ENCODE measurements at regions of chr15 and their contacts with region 1.

Region 1: GRCh38 chr15:73633111-73633990 is at the start of gene NPTN:
- DNase-seq: peak; percentile 96 to 99 (median 97)
- ATAC-seq: peak; percentile 90
- H3K4me3 ChIP-seq: peak within 1 kb of the TSS; percentile 51 to 74
- H3K4me3 Mint-ChIP-seq: peak within 1 kb of the TSS; percentile 82
- H3K27ac ChIP-seq: peak within 1 kb of the TSS; percentile 25 to 78
- H3K27ac Mint-ChIP-seq: peak within 1 kb of the TSS; percentile 81
- H3K4me1 ChIP-seq: peaks cover 33% of the 10 kb centered on the region
- H3K4me1 Mint-ChIP-seq: peaks cover 45% of the 10 kb centered on the region
- H3K27me3 ChIP-seq: no peaks in the 10 kb centered on the region
- H3K27me3 Mint-ChIP-seq: peaks cover 8% of the 10 kb centered on the region
- CTCF ChIP-seq: no peak
- total RNA-seq, gene NPTN: 12.5 to 18.2 TPM

Region 2: GRCh38 chr15:71971905-71972304 is 1661.4 kb before region 1 on chr15:
- CTCF ChIA-PET with region 1: no interaction called
- POLR2A ChIA-PET with region 1: no interaction called
- intact Hi-C with region 1: no loop called
- DNase-seq: no peak
- ATAC-seq: no peak
- H3K4me3 ChIP-seq: no peak overlapping the region
- H3K4me3 Mint-ChIP-seq: no peak overlapping the region
- H3K27ac ChIP-seq: no peak overlapping the region
- H3K27ac Mint-ChIP-seq: no peak overlapping the region
- H3K4me1 ChIP-seq: no peaks in the 10 kb centered on the region
- H3K4me1 Mint-ChIP-seq: no peaks in the 10 kb centered on the region
- H3K27me3 ChIP-seq: no peaks in the 10 kb centered on the region
- H3K27me3 Mint-ChIP-seq: no peaks in the 10 kb centered on the region
- CTCF ChIP-seq: no peak

Region 3: DNA sequence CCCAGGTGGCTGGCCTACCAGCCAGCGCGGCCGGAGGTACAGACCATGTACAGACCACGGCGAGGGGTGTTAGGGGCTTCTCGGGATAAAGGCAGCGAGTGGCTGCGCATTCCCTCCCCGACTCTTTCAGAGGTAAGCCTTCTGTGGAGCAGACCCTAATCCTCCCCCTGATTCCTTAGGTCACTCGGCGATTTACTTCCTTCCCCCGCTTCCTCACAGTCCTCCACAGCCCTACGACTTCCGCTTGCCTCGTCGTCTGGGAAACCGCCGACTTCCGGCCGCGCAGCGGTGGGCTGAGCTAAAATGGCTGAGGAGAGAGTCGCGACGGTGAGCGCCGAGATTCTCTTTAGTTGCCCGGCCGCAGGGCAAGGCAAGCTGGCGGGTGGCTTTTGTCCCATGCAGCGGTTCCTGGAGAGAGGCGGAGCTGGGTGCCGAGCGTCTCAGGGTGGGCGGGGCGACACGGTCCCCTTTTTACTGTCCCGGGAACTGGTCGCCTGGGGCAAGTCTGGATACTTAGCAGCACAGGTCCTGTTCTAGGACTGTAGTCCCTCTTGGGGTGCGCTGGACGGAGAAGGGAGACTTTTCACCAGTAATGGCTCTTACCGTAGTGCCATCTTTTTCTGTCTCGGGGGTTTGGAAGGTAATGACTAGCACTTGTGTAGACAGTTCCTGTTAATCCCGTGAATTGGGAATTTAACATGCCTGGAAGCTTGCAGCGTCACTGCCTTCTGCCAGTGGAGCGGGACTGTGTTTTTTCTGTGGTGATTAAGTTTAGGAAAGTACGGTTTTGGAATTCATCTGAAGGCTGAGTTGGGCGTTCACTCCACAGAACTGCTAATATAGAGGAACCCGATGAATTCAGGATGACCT is 947.2 kb before region 1 on chr15 and contains the starts of genes BBS4 and HIGD2B:
- CTCF ChIA-PET with region 1: no interaction called
- POLR2A ChIA-PET with region 1: no interaction called
- intact Hi-C with region 1: loop called in 1 of 2 experiments (anchors 10 kb)
- DNase-seq: peak; percentile 68 to 93 (median 86)
- ATAC-seq: peak; percentile 92
- H3K4me3 ChIP-seq: peak within 1 kb of the TSS; percentile 73 to 87
- H3K4me3 Mint-ChIP-seq: peak within 1 kb of the TSS; percentile 97
- H3K27ac ChIP-seq: peak within 1 kb of the TSS; percentile 86 to 90
- H3K27ac Mint-ChIP-seq: peak within 1 kb of the TSS; percentile 96
- H3K4me1 ChIP-seq: peaks cover 14% of the 10 kb centered on the region
- H3K4me1 Mint-ChIP-seq: peaks cover 18% of the 10 kb centered on the region
- H3K27me3 ChIP-seq: no peaks in the 10 kb centered on the region
- H3K27me3 Mint-ChIP-seq: no peaks in the 10 kb centered on the region
- CTCF ChIP-seq: no peak
- total RNA-seq, gene BBS4: 8.8 to 12.9 TPM
- total RNA-seq, gene HIGD2B: 0.27 TPM in 1 of 2 experiments, not detected in the other

Region 4: GRCh38 chr15:73305331-73306211 is 327.8 kb before region 1 on chr15:
- CTCF ChIA-PET with region 1: interaction called, 3 read pairs
- POLR2A ChIA-PET with region 1: no interaction called
- intact Hi-C with region 1: loop called in 1 of 2 experiments (anchors 10 kb)
- DNase-seq: peak in 2 of 9 experiments; percentile 46 to 57
- ATAC-seq: no peak
- H3K4me3 ChIP-seq: no peak overlapping the region
- H3K4me3 Mint-ChIP-seq: no peak overlapping the region
- H3K27ac ChIP-seq: no peak overlapping the region
- H3K27ac Mint-ChIP-seq: no peak overlapping the region
- H3K4me1 ChIP-seq: no peaks in the 10 kb centered on the region
- H3K4me1 Mint-ChIP-seq: peaks cover 4% of the 10 kb centered on the region
- H3K27me3 ChIP-seq: no peaks in the 10 kb centered on the region
- H3K27me3 Mint-ChIP-seq: no peaks in the 10 kb centered on the region
- CTCF ChIP-seq: no peak

Region 5: DNA sequence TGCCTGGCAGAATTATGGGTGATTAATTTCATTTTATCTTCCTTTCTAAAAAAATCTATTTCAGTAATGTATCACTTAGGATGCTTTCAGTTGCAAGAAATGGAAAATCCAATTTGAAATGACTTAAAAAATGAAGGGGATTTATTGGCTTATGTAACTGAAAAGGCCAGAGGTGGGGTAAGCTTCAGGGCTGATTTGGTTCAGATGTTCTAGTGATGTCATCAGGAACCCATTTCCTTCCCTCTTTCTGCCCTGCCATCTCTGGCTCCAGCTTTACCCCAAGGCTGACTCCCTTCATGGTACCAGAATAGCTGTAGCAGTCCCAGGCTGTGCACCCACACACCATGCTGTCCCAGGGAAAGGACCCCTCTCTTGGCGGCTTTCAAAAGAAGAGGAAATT is 208.8 kb before region 1 on chr15:
- CTCF ChIA-PET with region 1: no interaction called
- POLR2A ChIA-PET with region 1: no interaction called
- intact Hi-C with region 1: no loop called
- DNase-seq: no peak
- ATAC-seq: no peak
- H3K4me3 ChIP-seq: no peak overlapping the region
- H3K4me3 Mint-ChIP-seq: no peak overlapping the region
- H3K27ac ChIP-seq: no peak overlapping the region
- H3K27ac Mint-ChIP-seq: no peak overlapping the region
- H3K4me1 ChIP-seq: no peaks in the 10 kb centered on the region
- H3K4me1 Mint-ChIP-seq: no peaks in the 10 kb centered on the region
- H3K27me3 ChIP-seq: no peaks in the 10 kb centered on the region
- H3K27me3 Mint-ChIP-seq: peaks cover 27% of the 10 kb centered on the region
- CTCF ChIP-seq: no peak

Region 6: GRCh38 chr15:73608941-73609340 is 24.4 kb before region 1 on chr15:
- CTCF ChIA-PET with region 1: interaction called, 21 read pairs
- POLR2A ChIA-PET with region 1: no interaction called
- intact Hi-C with region 1: no loop called
- DNase-seq: no peak
- ATAC-seq: no peak
- H3K4me3 ChIP-seq: no peak overlapping the region
- H3K4me3 Mint-ChIP-seq: no peak overlapping the region
- H3K27ac ChIP-seq: no peak overlapping the region
- H3K27ac Mint-ChIP-seq: no peak overlapping the region
- H3K4me1 ChIP-seq: no peaks in the 10 kb centered on the region
- H3K4me1 Mint-ChIP-seq: peaks cover 66% of the 10 kb centered on the region
- H3K27me3 ChIP-seq: no peaks in the 10 kb centered on the region
- H3K27me3 Mint-ChIP-seq: no peaks in the 10 kb centered on the region
- CTCF ChIP-seq: no peak

Region 7: DNA sequence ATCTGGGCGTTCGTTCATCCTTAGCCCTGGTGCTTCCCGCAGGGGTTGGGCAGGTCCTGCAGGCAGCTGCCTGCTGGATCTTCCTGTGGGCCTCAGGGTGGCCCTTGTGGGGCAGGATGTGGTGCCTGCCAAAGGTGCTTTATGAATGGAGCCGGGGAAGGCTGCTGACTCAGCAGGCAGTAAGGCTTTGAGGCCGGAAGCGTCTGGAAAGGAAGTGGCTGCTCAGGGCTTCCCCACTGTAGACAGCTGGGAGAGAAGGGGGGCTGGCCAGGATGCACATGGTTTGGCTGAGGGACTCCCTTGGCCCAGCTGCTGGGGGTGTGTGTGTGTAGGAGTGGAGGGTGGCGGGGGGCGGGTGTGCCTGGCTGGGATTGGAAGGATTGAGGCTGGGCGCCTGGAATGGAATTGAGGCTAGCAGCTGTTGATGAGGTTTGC is 63.7 kb after region 1 on chr15:
- CTCF ChIA-PET with region 1: interaction called, 42 read pairs
- POLR2A ChIA-PET with region 1: interaction called, 4 read pairs
- intact Hi-C with region 1: loop called (anchors 1 to 2 kb)
- DNase-seq: peak; percentile 49 to 88 (median 75)
- ATAC-seq: peak; percentile 93
- H3K4me3 ChIP-seq: no peak overlapping the region
- H3K4me3 Mint-ChIP-seq: no peak overlapping the region
- H3K27ac ChIP-seq: no peak overlapping the region
- H3K27ac Mint-ChIP-seq: peak overlapping the region; percentile 41
- H3K4me1 ChIP-seq: peaks cover 16% of the 10 kb centered on the region
- H3K4me1 Mint-ChIP-seq: peaks cover 19% of the 10 kb centered on the region
- H3K27me3 ChIP-seq: peaks cover 5 to 13% of the 10 kb centered on the region in 2 experiments
- H3K27me3 Mint-ChIP-seq: peaks cover 62% of the 10 kb centered on the region
- CTCF ChIP-seq: no peak

Region 8: DNA sequence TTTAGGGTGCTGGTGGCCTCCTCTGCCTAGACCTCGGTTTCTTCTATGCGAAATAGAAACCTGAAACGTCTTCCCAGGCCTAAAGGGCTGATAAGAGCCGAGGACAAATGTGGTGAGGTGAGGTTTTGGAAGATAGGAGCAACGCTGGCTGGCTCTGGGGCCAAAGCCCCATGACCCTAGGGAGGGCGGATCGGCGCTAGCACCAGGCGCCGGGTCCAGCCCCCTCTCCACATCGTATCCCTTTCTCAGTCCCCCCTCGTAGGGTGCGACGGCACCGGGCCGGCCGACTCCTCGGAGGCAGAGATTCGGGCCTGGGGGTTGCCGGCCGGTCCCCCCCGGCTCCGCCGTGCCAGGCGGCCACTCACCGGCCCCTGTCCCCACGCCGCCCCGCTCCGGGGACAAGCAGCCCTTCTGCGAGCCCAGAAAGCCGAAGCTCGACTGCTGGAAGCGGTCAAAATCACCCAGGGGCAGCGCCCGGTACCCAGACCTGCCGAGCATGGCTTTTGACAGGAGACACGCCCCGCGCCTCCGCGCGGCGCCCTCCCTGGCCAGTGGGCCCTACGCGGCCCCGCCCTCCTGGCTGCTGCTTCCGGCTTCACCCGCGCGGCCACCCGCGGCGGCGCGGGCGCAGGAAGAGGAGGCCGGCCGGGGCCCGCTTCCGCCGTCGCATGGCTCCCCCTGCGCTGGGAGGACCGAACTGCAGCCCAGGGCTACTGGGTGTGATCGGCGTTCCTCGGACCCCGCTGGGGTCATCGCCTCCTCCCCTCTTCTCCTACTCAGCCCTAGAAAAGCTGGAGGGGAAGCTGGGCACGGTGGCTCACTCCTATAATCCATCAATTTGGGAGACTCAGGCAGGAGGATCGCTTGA is 358.6 kb after region 1 on chr15 and contains the start of gene STOML1:
- CTCF ChIA-PET with region 1: no interaction called
- POLR2A ChIA-PET with region 1: no interaction called
- intact Hi-C with region 1: loop called in 1 of 2 experiments (anchors 5 kb)
- DNase-seq: peak; percentile 88 to 97 (median 96)
- ATAC-seq: peak; percentile 79
- H3K4me3 ChIP-seq: peak within 1 kb of the TSS; percentile 62 to 88
- H3K4me3 Mint-ChIP-seq: peak within 1 kb of the TSS; percentile 100
- H3K27ac ChIP-seq: peak within 1 kb of the TSS; percentile 53
- H3K27ac Mint-ChIP-seq: peak within 1 kb of the TSS; percentile 73
- H3K4me1 ChIP-seq: peaks cover 42% of the 10 kb centered on the region
- H3K4me1 Mint-ChIP-seq: peaks cover 48% of the 10 kb centered on the region
- H3K27me3 ChIP-seq: no peaks in the 10 kb centered on the region
- H3K27me3 Mint-ChIP-seq: no peaks in the 10 kb centered on the region
- CTCF ChIP-seq: peak; percentile 95
- total RNA-seq, gene STOML1: 2.5 to 4.8 TPM

Measured in CD8-positive, alpha-beta T cell (primary cell).